CD8-positive, alpha-beta T cell (primary cell): ENCODE measurements at regions of chr9 and their contacts with region 1.

Region 1: DNA sequence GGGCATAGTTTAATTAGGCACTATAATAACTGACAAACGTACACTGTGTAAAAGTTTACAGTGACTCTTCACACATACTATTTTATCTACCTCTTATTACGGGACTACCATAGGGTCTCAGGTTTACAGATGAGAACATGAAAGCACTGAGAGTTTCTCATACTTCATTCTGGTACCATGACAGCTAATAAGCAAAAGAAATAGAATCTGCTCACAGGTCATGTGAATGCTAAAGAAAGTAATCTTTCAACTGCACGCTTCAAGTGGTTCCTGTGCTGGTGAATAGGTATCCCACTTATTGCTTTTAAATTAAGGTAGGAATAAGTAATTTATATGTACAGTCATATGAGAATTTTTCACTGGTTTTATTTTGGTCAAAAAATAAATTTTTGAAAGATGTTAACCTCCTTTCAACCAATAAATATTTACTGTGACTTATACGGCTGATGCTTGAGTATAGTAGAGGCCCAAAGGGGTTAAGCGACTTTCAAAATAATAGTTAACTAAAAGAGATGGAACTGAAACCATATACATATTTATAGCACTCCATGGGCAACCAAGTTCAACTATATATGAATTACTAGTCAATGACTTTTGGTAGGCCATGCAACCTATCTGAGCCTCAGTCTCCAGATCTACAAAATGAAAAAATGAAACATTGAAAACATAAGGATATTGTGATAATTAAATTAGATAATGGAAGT is 8.1 kb downstream of the CDKN2A start:
- DNase-seq: no peak
- ATAC-seq: no peak
- H3K4me3 ChIP-seq: no peak overlapping the region
- H3K4me3 Mint-ChIP-seq: no peak overlapping the region
- H3K27ac ChIP-seq: no peak overlapping the region
- H3K27ac Mint-ChIP-seq: no peak overlapping the region
- H3K4me1 ChIP-seq: no peaks in the 10 kb centered on the region
- H3K4me1 Mint-ChIP-seq: peaks cover 4% of the 10 kb centered on the region
- H3K27me3 ChIP-seq: peaks cover 10 to 24% of the 10 kb centered on the region in 2 experiments
- H3K27me3 Mint-ChIP-seq: peaks cover 68% of the 10 kb centered on the region
- CTCF ChIP-seq: no peak

Region 2: DNA sequence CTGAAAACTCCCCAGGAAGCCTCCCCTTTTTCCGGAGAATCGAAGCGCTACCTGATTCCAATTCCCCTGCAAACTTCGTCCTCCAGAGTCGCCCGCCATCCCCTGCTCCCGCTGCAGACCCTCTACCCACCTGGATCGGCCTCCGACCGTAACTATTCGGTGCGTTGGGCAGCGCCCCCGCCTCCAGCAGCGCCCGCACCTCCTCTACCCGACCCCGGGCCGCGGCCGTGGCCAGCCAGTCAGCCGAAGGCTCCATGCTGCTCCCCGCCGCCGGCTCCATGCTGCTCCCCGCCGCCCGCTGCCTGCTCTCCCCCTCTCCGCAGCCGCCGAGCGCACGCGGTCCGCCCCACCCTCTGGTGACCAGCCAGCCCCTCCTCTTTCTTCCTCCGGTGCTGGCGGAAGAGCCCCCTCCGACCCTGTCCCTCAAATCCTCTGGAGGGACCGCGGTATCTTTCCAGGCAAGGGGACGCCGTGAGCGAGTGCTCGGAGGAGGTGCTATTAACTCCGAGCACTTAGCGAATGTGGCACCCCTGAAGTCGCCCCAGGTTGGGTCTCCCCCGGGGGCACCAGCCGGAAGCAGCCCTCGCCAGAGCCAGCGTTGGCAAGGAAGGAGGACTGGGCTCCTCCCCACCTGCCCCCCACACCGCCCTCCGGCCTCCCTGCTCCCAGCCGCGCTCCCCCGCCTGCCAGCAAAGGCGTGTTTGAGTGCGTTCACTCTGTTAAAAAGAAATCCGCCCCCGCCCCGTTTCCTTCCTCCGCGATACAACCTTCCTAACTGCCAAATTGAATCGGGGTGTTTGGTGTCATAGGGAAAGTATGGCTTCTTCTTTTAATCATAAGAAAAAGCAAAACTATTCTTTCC is 11.3 kb before region 1 on chr9:
- CTCF ChIA-PET with region 1: interaction called, 3 read pairs
- POLR2A ChIA-PET with region 1: interaction called, 3 read pairs
- intact Hi-C with region 1: loop called in 1 of 2 experiments (anchors 2 kb)
- DNase-seq: peak in 6 of 9 experiments; percentile 20 to 58 (median 30)
- ATAC-seq: peak; percentile 70
- H3K4me3 ChIP-seq: peak overlapping the region; percentile 25 to 42
- H3K4me3 Mint-ChIP-seq: peak overlapping the region; percentile 74
- H3K27ac ChIP-seq: no peak overlapping the region
- H3K27ac Mint-ChIP-seq: no peak overlapping the region
- H3K4me1 ChIP-seq: peaks cover 15% of the 10 kb centered on the region
- H3K4me1 Mint-ChIP-seq: peaks cover 18% of the 10 kb centered on the region
- H3K27me3 ChIP-seq: peaks cover 69 to 87% of the 10 kb centered on the region in 2 experiments
- H3K27me3 Mint-ChIP-seq: peaks cover 86% of the 10 kb centered on the region
- CTCF ChIP-seq: no peak